ENCODE measurements at regions of chr11 and their contacts with region 1.

Region 1: GRCh38 chr11:34600339-34601084 is 20.4 kb upstream of the EHF start:
- DNase-seq: peak; percentile 72
- H3K4me3 ChIP-seq: peak overlapping the region in 1 of 4 donors; percentile 17
- H3K27ac ChIP-seq: peak overlapping the region; percentile 77 to 89 (median 86)
- H3K4me1 ChIP-seq: peaks cover 12 to 56% (median 33%) of the 10 kb centered on the region in 4 donors
- H3K27me3 ChIP-seq: no peaks in the 10 kb centered on the region
- CTCF ChIP-seq: no peak
- EP300 ChIP-seq: no peak
- POLR2A ChIP-seq: peak; percentile 78

Region 2: DNA sequence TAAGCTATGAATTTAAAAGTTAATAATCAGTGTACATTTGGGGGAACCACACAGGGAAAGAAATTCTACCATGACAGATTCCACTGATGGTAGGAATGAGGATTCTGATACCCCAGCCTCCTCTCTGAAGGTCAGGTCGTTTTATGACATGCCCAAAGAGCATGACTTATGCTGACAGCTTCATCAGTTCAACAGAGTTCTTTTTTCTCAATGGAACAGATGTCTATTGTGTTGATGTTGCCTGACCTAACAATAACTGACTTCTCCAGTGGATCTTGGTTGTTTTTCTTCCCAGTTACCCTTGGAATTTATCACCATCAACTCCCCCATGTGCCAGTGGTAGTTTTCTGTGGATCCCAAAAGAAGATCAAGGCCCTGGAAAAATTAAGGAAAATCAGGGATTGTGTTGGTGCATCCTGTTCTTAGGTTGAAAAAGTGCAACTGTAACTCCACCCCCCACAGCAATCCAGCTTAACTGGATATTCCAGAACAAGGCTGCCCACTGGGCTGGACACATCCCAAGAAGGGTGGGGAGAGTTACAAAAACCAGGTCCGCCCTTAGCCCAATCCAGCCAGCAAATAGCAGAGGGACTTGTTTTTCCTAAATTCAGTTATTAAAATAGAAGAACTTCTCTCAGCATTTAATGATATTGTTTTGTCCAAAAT is 193.3 kb before region 1 on chr11:
- in situ Hi-C with region 1: no loop called
- intact Hi-C with region 1: no loop called
- DNase-seq: no peak
- H3K4me3 ChIP-seq: no peak overlapping the region
- H3K27ac ChIP-seq: no peak overlapping the region
- H3K4me1 ChIP-seq: no peaks in the 10 kb centered on the region
- H3K27me3 ChIP-seq: peaks cover 19% of the 10 kb centered on the region
- CTCF ChIP-seq: no peak
- EP300 ChIP-seq: no peak
- POLR2A ChIP-seq: no peak

Region 3: GRCh38 chr11:34899633-34900016 is 299.1 kb after region 1 on chr11:
- in situ Hi-C with region 1: loop called in 1 of 4 experiments (anchors 25 kb)
- intact Hi-C with region 1: loop called (anchors 2 kb)
- DNase-seq: no peak
- H3K4me3 ChIP-seq: no peak overlapping the region
- H3K27ac ChIP-seq: no peak overlapping the region
- H3K4me1 ChIP-seq: no peaks in the 10 kb centered on the region
- H3K27me3 ChIP-seq: no peaks in the 10 kb centered on the region
- CTCF ChIP-seq: no peak
- EP300 ChIP-seq: no peak
- POLR2A ChIP-seq: no peak

Region 4: GRCh38 chr11:35021589-35021988 is 421.1 kb after region 1 on chr11:
- in situ Hi-C with region 1: no loop called
- intact Hi-C with region 1: no loop called
- DNase-seq: no peak
- H3K4me3 ChIP-seq: no peak overlapping the region
- H3K27ac ChIP-seq: no peak overlapping the region
- H3K4me1 ChIP-seq: peaks cover 0 to 12% (median 4%) of the 10 kb centered on the region in 4 donors
- H3K27me3 ChIP-seq: no peaks in the 10 kb centered on the region
- CTCF ChIP-seq: no peak
- EP300 ChIP-seq: no peak
- POLR2A ChIP-seq: no peak